Posterior vena cava (tissue), 2 donors: ENCODE measurements at regions of chr10 and their contacts with region 1.

Region 1: GRCh38 chr10:63718006-63718405 is 196.8 kb downstream of the REEP3 start:
- DNase-seq: no peak

Region 2: GRCh38 chr10:63236113-63236935 is 481.7 kb before region 1 on chr10:
- intact Hi-C with region 1: no loop called
- DNase-seq: no peak

Region 3: DNA sequence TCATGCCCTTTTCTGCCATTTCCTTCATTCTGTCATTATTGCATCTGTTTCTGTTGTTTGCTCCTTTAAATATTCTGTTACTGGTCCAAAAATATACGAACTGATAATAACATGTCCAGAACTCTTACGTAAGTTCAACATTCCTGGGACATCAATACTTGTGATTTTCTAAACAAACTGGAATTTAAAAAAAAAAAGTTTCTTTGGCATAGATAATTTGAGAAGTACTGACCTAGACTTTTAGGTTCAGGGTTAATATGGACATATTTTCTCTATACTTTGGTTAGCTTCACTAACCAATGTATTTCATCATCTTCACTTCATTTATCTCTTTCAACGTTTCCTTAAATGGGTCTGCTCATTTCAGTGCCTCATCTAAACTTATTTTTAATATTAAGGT is 399.5 kb before region 1 on chr10:
- intact Hi-C with region 1: no loop called
- DNase-seq: no peak

Region 4: GRCh38 chr10:63528084-63528747 is 189.8 kb before region 1 on chr10:
- intact Hi-C with region 1: no loop called
- DNase-seq: no peak

Region 5: DNA sequence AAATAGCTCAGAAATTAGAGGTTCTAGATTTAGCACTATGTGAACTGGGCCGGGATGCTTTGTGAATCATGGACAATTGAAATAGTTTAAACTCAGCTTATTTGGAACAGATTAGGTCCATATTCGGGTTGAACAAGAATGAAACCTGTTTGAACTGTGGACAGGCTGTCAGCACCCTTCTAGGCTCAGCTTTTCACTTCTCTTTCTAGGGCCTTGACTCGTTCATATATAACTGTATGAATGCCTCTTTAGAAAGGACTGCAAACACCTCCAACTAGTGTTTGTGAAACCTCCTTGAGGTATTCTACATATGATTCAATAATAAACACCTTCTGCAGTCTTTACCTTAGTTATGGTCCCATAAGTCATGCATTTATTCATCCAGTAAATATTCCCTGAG is 81.2 kb before region 1 on chr10:
- intact Hi-C with region 1: loop called in 1 of 2 experiments (anchors 5 kb)
- DNase-seq: no peak